ENCODE measurements at regions of chr12 and their contacts with region 1.

Region 1: DNA sequence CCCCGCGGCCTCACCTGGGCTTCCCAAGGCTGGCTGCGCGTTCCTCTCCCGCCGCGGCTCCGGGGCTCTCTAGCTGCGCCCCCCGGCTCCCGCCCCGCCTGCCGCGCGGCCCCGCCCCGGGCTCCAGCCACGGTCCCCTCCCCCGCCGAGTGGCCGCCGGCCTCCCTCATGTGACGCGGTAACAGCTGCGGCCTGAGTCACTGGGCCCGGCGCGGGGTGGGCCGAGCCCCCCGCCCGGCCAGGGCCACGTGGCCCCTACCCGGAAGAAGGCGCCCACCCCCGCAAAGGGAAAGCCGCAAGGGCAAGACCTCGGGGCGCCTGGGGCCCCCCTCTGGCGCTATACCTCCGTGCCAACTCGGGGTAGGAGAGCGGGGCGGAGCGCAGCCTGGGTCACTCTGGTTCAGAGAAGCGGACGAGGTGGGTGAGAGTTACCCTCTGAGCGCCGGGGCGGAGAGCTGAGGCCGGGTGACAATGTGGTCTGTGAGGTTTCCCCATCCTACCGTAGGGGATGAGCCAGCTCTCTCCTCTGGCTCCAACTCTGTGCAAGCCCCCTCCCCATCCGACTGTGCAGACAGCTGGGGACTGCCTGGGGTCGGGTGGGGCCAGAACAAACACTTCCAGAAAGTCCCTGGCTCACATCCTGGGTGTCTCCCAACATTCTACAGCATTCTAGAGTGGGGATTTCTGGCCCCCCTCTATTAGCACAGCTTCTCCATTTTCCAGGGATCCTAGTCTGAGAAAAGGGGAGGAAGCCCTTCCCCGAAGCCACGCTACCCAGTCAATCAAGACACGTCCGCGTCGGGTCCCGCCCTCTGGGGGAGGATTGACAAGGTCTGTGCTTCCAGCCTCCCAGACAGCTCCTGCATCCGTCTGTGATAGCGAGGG is at the start of gene CD63:
- DNase-seq: peak; percentile 82
- H3K4me3 ChIP-seq: peak within 1 kb of the TSS; percentile 99
- H3K27ac ChIP-seq: peak within 1 kb of the TSS; percentile 100
- H3K27me3 ChIP-seq: no peaks in the 10 kb centered on the region
- CTCF ChIP-seq: no peak
- polyA plus RNA-seq, gene CD63: 1,757 and 1,955 TPM in 2 replicates

Region 2: GRCh38 chr12:55715833-55716581 is 13.2 kb before region 1 on chr12 and contains the start of gene BLOC1S1:
- CTCF ChIA-PET with region 1: interaction called, 5 read pairs
- POLR2A ChIA-PET with region 1: interaction called, 20 read pairs
- DNase-seq: peak; percentile 86
- H3K4me3 ChIP-seq: peak within 1 kb of the TSS; percentile 80
- H3K27ac ChIP-seq: peak within 1 kb of the TSS; percentile 93
- H3K27me3 ChIP-seq: no peaks in the 10 kb centered on the region
- CTCF ChIP-seq: no peak
- polyA plus RNA-seq, gene BLOC1S1: 132 and 155 TPM in 2 replicates

Measured in AG04450 (cell line).